Head of caudate nucleus (tissue), 42 donors: ENCODE measurements at regions of chr22 and their contacts with region 1.

Region 1: GRCh38 chr22:24951942-24952836 is at the start of gene KIAA1671:
- DNase-seq: peak; percentile 50 to 93 (median 88)

Region 2: GRCh38 chr22:25007444-25008106 is 55.4 kb after region 1 on chr22:
- intact Hi-C with region 1: no loop called
- DNase-seq: no peak

Region 3: DNA sequence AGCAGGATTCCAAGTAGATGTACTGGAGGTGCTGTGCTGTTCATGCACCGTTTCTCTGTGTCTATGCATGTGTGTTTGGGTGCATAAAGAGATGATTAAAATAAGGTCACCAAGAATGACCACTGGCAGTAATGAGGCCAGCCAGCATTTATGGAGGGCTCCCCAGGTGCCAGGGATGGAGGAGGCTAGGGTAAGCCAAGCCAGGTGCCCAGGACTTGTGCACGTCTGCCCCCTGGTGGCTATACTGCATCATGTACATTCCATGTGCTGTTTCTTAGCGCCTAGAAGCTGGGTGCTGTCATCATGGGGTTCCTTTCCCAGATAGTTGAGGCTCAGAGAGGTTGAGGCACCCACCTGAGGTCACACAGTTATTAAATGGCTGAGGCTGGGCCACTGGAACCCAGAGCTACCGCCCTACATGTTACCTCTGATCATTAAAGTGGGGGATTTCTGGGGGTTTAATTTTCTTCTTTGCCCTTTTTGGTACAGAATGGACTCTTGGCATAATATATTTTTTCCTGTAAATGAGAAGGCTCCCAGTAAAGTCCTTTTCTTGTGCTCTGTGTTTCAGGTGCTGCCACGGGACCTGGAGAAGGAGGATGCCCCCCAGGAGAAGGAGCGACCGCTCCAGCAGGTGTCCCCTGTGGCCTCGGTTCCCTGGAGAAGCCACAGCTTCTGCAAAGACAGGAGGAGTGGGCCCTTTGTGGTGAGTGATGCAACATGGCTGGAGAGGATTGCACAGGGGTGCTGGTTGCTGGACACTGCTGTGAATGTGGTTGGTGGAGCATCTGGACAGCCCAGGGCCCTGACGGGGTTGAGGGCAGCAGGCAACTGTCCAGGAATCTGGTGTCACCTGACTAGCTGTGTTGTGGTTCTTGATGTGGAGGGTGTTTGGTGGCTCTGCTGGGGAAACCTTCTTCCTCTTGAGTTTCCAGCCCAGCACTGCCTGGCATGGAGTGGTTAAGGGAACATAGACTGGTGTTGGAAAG is 96.8 kb after region 1 on chr22:
- intact Hi-C with region 1: loop called (anchors 5 kb)
- DNase-seq: peak; percentile 46 to 89 (median 73)

Region 4: DNA sequence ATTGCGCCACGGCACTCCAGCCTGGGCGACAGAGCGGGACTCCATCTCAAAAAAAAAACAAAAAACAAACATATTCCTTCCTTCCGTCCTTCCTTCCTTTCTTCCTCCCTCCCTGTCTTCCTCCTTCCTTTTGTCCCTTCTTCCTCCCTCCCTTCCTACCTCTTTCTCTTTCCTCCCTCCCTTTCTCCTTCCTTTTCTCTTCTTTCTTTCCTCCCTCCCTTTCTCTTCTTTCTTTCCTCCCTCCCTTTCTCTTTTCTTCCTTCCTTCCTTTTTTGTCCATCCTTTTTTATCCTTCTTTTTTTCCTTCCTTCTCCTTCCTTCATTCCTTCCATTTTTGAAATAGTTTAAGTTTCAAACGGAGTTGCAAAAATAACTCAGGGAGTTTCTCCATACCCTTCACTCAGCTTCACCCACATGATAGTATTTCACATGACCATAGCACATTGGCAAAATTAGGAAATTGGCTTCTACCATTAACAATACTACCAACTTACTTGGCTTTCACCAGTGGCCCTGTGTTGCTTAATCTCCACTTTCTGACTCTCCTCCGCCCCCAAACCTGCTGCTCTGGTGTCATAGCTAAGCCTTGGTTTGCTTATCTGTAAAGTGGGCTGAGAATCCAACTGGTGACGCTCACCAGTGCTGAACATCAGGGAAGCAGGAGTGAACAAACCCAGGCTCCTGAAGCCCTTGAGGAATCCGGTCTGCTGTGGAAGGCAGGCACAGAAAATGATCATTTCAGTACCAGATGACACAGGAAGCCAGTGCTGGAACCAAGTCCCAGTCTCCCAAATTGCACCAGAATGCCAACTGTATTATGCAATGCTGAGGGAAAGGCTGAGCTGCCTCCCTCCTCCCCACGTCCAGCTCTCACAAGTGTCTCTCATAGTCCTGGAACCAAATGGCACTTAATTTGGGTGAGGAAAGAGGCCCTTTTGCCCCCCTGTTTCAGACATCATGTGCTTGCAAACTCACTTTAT is 230.2 kb after region 1 on chr22:
- intact Hi-C with region 1: no loop called
- DNase-seq: peak in 5 of 42 donors; percentile 11 to 64 (median 18)